GM12878 (cell line): ENCODE measurements at regions of chr12 and their contacts with region 1.

Region 1: DNA sequence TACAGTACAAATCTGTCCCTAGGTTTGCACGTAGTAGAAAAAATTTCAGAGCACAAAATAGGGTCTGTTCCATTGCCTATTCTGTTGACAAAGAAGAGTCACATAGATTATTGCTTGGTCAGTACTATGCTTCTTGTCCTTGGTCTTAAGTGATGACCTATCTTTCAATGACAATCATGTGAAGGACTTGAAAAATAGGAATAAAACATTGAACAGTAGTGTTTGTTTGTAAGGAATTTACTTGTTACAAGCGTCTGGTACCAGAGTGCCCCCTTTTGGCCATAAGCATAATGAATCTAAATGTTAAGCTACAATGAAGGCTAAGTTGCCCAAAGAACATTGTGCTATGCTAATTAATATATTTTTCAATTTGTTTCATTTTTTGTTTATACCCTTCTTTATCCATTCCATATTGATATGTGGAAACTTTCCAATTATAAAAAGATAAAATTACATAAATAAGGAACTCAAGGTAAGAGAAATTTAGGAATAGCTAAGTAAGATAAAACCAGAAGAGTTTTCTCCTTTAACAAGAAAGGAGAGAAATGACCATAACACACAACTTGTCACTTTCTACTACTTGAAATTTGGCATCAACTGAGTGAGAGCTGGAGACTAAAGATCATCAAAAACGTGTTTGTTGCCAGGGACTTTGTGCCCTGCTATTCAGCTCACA is 204.7 kb downstream of the EPS8 start:
- DNase-seq: no peak
- ATAC-seq: peak; percentile 78
- H3K4me3 ChIP-seq: no peak overlapping the region
- H3K27ac ChIP-seq: no peak overlapping the region
- H3K4me1 ChIP-seq: no peaks in the 10 kb centered on the region
- H3K27me3 ChIP-seq: 0 out of 4 replicates have a peak, but pooled peaks cover 0 to 1% of the 10 kb centered on the region in 2 experiments
- CTCF ChIP-seq: peak; percentile 68 to 81 (median 69)
- EP300 ChIP-seq: no peak
- POLR2A ChIP-seq: no peak
- RAD21 ChIP-seq: peak; percentile 93

Region 2: DNA sequence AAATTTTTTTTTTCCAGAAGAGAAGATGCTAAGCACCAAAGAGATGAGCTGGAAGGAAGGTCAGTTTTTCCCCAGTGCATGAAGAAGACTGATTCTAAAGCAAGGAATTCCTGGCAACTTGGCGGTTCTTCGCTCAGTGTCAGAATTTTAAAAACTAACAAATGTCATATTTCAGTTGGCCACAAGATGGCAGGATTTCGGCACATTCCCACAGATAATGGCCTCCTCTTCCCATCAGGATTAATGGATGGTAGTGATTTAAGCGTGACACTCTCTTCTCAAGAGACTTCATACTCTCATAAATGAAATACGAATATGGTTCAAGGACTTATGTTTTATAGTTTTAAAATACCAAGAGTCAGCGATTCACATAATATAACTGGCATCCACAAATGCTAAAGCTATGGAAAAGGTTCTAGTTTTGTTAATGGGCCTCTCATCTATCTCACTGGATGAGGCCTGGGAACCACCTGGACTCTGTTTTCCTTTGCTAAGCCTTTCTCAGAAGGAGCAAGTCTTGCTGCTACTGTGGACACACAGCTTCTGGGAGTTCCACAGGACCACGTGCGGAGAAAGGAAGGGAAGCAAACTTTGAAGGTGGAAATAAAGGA is 308.3 kb before region 1 on chr12:
- CTCF ChIA-PET with region 1: interaction called, 78 read pairs
- POLR2A ChIA-PET with region 1: no interaction called
- RAD21 ChIA-PET with region 1: interaction called, 31 read pairs
- SMC1A ChIA-PET with region 1: interaction called, 28 read pairs
- in situ Hi-C with region 1: loop called (anchors 5 kb)
- intact Hi-C with region 1: loop called (anchors 2 kb)
- DNase-seq: no peak
- ATAC-seq: peak; percentile 29
- H3K4me3 ChIP-seq: no peak overlapping the region
- H3K27ac ChIP-seq: no peak overlapping the region
- H3K4me1 ChIP-seq: no peaks in the 10 kb centered on the region
- H3K27me3 ChIP-seq: no peaks in the 10 kb centered on the region
- CTCF ChIP-seq: peak; percentile 52 to 69 (median 57); a peak in 5 of 6 replicates
- EP300 ChIP-seq: no peak
- POLR2A ChIP-seq: no peak
- RAD21 ChIP-seq: peak; percentile 54

Region 3: GRCh38 chr12:15532364-15532977 is 52.0 kb before region 1 on chr12:
- CTCF ChIA-PET with region 1: interaction called, 1,078 read pairs
- POLR2A ChIA-PET with region 1: interaction called, 10 read pairs
- RAD21 ChIA-PET with region 1: interaction called, 609 read pairs
- SMC1A ChIA-PET with region 1: interaction called, 853 read pairs
- in situ Hi-C with region 1: loop called (anchors 5 kb)
- intact Hi-C with region 1: loop called (anchors 1 kb)
- DNase-seq: peak; percentile 36
- ATAC-seq: peak; percentile 89
- H3K4me3 ChIP-seq: no peak overlapping the region
- H3K27ac ChIP-seq: no peak overlapping the region
- H3K4me1 ChIP-seq: no peaks in the 10 kb centered on the region; the same call in 1 of the 2 replicates
- H3K27me3 ChIP-seq: no peaks in the 10 kb centered on the region; a peak in 1 of 4 replicates
- CTCF ChIP-seq: peak; percentile 57 to 89 (median 62)
- EP300 ChIP-seq: no peak
- POLR2A ChIP-seq: no peak
- RAD21 ChIP-seq: peak; percentile 98

Region 4: GRCh38 chr12:15546102-15546701 is 38.3 kb before region 1 on chr12:
- CTCF ChIA-PET with region 1: interaction called, 50 read pairs
- POLR2A ChIA-PET with region 1: no interaction called
- RAD21 ChIA-PET with region 1: interaction called, 31 read pairs
- SMC1A ChIA-PET with region 1: interaction called, 29 read pairs
- in situ Hi-C with region 1: no loop called
- intact Hi-C with region 1: no loop called
- DNase-seq: peak; percentile 25
- ATAC-seq: peak; percentile 87
- H3K4me3 ChIP-seq: peak overlapping the region; percentile 52
- H3K27ac ChIP-seq: peak overlapping the region; percentile 66
- H3K4me1 ChIP-seq: peaks cover 19% of the 10 kb centered on the region
- H3K27me3 ChIP-seq: no peaks in the 10 kb centered on the region
- CTCF ChIP-seq: no peak
- EP300 ChIP-seq: no peak
- POLR2A ChIP-seq: no peak
- RAD21 ChIP-seq: no peak

Region 5: DNA sequence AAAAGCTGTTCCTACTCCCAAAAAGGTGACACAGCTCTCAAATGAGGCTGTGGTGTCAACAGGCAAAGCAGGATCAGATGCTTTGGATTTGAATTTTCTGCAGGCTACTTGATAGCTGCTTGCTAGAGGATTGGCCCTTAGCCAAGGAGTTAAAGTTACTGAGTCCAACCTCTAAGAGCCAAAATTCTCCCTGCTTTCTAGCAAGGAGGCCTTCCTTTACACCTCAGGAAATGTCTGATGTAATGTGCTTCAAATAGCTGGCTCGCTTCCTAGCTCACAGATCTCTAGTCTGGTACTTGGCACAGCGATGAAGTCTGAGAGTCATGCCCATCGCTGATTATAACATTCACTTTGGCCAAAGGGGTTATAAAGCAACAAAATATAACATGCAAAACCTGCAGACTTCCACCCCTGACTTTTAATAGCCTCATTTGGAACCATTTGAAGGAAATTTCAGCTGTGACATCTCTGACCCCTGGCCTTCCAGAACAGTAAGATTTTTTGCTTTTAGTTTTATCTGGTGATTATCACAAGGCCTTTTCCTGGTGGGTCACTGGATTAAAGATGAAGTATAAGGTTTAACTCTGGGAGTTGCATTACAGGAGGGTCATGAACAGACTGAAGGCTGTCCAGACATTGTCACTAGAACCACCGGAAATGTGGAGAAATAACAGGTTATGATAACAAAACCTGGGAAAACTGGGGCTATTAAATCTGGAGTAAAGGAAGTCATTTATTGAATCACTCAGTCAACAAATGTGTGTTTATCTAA is 14.9 kb after region 1 on chr12:
- CTCF ChIA-PET with region 1: interaction called, 12 read pairs
- POLR2A ChIA-PET with region 1: no interaction called
- RAD21 ChIA-PET with region 1: interaction called, 7 read pairs
- SMC1A ChIA-PET with region 1: interaction called, 9 read pairs
- in situ Hi-C with region 1: no loop called
- intact Hi-C with region 1: no loop called
- DNase-seq: no peak
- ATAC-seq: no peak
- H3K4me3 ChIP-seq: no peak overlapping the region
- H3K27ac ChIP-seq: no peak overlapping the region
- H3K4me1 ChIP-seq: no peaks in the 10 kb centered on the region
- H3K27me3 ChIP-seq: no peaks in the 10 kb centered on the region; a peak in 1 of 4 replicates
- CTCF ChIP-seq: no peak
- EP300 ChIP-seq: no peak
- POLR2A ChIP-seq: no peak
- RAD21 ChIP-seq: no peak

Region 6: GRCh38 chr12:15772405-15773018 is 188.0 kb after region 1 on chr12:
- CTCF ChIA-PET with region 1: interaction called, 8 read pairs
- POLR2A ChIA-PET with region 1: no interaction called
- RAD21 ChIA-PET with region 1: interaction called, 3 read pairs
- SMC1A ChIA-PET with region 1: interaction called, 11 read pairs
- in situ Hi-C with region 1: no loop called
- intact Hi-C with region 1: no loop called
- DNase-seq: no peak
- ATAC-seq: peak; percentile 4
- H3K4me3 ChIP-seq: no peak overlapping the region
- H3K27ac ChIP-seq: no peak overlapping the region
- H3K4me1 ChIP-seq: no peaks in the 10 kb centered on the region
- H3K27me3 ChIP-seq: no peaks in the 10 kb centered on the region
- CTCF ChIP-seq: peak; percentile 22 to 39 (median 30); a peak in 4 of 6 replicates
- EP300 ChIP-seq: no peak
- POLR2A ChIP-seq: no peak
- RAD21 ChIP-seq: peak; percentile 37; the same call in 1 of the 2 replicates

Region 7: DNA sequence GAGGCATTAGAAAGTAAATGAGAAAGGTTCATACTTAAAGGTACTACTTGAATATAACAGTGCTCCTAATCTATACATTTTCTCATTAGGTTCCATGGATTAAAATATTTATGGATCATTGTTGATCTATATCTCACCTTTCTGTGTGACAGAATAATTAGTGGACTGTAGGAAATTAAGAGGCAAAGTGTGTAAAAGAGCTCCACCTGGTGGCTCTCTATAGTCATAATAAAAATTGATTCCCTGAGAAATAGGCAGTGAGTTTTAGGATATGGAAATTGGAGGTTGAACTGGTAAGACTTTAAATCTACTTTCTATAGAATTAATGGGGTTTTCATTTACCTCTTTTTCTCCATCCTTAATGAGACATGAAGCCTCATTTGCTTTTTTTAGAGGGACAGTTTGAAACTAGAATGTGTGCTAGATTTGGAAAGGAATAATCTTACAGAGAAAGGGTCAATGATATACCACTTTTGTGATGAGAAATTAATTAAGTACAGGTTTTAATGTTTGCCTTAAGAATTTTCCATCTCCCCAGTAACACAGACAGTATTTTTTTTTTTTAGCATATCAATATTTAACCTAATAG is 314.9 kb after region 1 on chr12:
- CTCF ChIA-PET with region 1: interaction called, 35 read pairs
- POLR2A ChIA-PET with region 1: no interaction called
- RAD21 ChIA-PET with region 1: interaction called, 5 read pairs
- SMC1A ChIA-PET with region 1: interaction called, 13 read pairs
- in situ Hi-C with region 1: no loop called
- intact Hi-C with region 1: no loop called
- DNase-seq: no peak
- ATAC-seq: peak; percentile 76
- H3K4me3 ChIP-seq: no peak overlapping the region
- H3K27ac ChIP-seq: no peak overlapping the region
- H3K4me1 ChIP-seq: no peaks in the 10 kb centered on the region
- H3K27me3 ChIP-seq: no peaks in the 10 kb centered on the region
- CTCF ChIP-seq: peak; percentile 43 to 64 (median 57)
- EP300 ChIP-seq: no peak
- POLR2A ChIP-seq: no peak
- RAD21 ChIP-seq: peak; percentile 66